ENCODE measurements at regions of chr6 and their contacts with region 1.

Region 1: DNA sequence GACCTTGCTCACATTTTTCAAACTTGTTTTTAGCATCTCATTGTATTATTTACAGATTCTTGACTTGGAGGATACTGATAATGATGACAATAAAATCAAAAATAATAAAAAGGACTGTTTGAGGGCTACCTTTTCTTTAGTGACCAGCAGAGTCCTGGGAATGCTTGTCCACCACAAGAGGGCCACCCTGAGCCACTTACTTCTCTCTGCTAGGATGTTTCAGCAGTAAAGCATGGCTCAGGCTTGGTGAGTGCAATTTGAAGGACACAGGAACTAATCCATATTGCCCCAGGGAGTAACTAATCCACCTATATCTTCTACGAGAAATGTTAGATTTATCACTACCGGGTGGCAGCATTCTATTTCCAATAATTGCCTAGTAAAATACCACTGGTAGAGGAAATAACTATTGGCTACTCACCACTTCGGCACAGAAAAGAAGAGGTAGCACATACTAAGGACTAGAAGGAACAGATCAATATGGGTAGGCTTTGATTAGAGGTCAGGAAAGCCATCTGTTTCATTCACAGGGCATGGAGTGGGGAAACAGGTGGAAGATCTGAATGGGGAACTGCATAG is 5.8 kb upstream of the KIAA0408 start:
- H3K4me3 Mint-ChIP-seq: no peak overlapping the region
- H3K27ac Mint-ChIP-seq: no peak overlapping the region
- H3K4me1 Mint-ChIP-seq: no peaks in the 10 kb centered on the region
- H3K27me3 Mint-ChIP-seq: no peaks in the 10 kb centered on the region

Region 2: DNA sequence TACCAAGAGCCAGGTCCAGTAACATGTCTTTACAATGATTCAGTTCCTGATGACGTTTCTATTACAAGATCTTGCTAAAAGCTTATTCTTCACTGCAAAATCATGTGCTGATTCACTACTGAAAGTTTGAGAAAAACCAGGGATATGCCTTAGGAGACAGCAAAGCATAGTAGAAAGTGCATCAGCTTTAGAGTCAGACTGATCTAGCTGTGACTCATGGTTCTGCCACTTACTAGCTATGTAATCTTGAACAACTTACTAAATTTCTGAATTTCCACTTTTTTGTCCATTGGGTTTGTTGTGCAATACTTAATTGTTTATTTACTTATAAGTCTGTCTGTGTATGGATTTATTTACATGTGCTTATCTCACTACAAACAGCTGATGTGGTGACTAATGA is 545.0 kb before region 1 on chr6:
- intact Hi-C with region 1: no loop called
- H3K4me3 Mint-ChIP-seq: no peak overlapping the region
- H3K27ac Mint-ChIP-seq: no peak overlapping the region
- H3K4me1 Mint-ChIP-seq: no peaks in the 10 kb centered on the region
- H3K27me3 Mint-ChIP-seq: no peaks in the 10 kb centered on the region

Region 3: DNA sequence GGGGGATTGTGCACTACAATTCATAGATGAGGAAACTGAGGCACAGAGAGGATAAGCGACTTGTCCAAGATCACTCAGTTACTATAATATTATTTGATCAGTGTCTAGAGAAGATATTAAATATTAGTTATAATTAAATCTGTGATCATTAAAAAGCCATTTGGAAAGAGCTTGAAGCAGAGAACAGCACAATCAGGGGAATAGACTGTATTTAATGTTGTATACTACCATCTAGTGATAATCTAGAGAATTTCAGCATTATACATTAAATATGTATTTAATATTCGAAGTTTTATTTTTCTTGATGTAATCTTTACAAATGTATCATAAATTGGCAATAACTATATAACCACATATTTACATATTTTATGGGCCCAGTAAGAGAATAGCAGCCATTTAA is 74.3 kb after region 1 on chr6:
- intact Hi-C with region 1: loop called (anchors 1 kb)
- H3K4me3 Mint-ChIP-seq: no peak overlapping the region
- H3K27ac Mint-ChIP-seq: no peak overlapping the region
- H3K4me1 Mint-ChIP-seq: peaks cover 7% of the 10 kb centered on the region
- H3K27me3 Mint-ChIP-seq: peaks cover 11% of the 10 kb centered on the region

Region 4: GRCh38 chr6:127641905-127642304 is 176.9 kb after region 1 on chr6:
- intact Hi-C with region 1: loop called (anchors 10 kb)
- H3K4me3 Mint-ChIP-seq: no peak overlapping the region
- H3K27ac Mint-ChIP-seq: no peak overlapping the region
- H3K4me1 Mint-ChIP-seq: no peaks in the 10 kb centered on the region
- H3K27me3 Mint-ChIP-seq: no peaks in the 10 kb centered on the region